ENCODE measurements at regions of chr17 and their contacts with region 1.

Region 1: DNA sequence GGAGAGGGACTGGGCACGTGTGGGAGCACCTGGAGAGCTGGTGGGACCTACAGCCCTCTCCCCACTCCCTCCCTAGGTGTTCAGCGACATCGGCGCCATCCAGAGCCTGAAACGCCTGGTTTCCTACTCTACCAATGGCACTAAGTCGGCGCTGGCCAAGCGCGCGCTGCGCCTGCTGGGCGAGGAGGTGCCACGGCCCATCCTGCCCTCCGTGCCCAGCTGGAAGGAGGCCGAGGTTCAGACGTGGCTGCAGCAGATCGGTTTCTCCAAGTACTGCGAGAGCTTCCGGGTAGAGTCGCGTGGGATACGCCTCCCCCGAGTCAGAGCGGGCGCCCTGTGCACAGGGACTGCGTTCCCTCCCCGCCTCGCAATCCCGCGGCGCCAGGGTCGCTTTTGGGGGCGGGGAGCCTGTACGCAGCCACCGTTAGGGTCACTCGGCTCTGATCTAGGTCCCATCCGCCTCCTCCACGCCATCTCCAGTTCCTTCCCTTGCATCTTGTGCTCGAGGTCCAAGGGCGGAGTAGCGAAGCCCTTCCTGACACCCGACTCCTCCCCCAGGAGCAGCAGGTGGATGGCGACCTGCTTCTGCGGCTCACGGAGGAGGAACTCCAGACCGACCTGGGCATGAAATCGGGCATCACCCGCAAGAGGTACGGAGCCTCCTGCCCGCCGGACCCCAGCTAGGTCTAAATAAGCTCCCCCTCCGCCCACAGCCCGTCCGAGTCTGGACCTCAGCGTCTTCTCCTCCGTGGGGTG is 13.0 kb downstream of the SARM1 start:
- DNase-seq: peak; percentile 53
- ATAC-seq: peak; percentile 52
- H3K4me3 Mint-ChIP-seq: peak overlapping the region; percentile 89
- H3K27ac Mint-ChIP-seq: no peak overlapping the region
- H3K4me1 Mint-ChIP-seq: peaks cover 11% of the 10 kb centered on the region
- H3K27me3 Mint-ChIP-seq: peaks cover 83% of the 10 kb centered on the region
- CTCF ChIP-seq: no peak

Region 2: DNA sequence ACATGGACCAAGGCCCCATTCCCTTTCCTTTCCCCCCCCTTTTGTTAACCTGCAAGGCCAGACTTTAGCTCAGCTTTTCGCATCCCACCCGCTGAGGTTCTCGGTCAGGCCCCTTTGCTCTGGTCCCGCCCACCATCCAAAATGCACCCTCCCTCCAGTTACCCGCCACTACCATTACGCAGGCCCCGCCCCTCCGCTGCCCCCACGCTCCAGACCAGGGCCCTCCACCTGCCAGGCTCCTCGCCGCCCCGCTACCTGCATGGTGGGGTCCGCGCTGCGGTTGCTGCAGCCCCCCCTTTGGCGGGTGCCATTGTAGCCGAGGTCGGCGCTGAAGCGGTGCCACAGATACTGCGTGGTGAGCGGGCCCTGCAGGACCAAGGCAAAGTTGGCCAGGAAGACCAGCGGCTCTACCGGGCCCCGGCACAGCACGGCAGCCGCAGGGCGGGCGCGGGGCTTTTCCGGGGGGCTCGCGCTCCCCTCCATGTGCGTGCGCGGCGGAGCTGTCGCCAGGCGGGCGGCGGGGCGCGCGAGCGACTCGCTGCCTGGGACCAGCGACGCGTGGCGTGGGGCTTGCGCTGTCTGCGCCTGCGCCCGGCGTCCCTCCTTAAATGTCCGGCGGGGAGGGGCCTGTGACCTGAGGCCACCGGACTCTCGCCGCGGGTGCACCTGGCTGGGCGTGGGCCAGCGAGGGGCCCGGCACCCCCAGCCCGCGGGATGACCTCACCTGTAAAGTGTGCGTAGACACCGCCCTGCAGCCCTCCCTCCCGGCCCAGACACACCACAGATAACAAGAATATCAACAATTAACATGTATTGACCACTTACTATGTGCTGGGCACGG is 21.4 kb after region 1 on chr17 and contains the start of gene SLC46A1:
- CTCF ChIA-PET with region 1: interaction called, 14 read pairs
- POLR2A ChIA-PET with region 1: interaction called, 5 read pairs
- DNase-seq: peak; percentile 80
- ATAC-seq: peak; percentile 53
- H3K4me3 Mint-ChIP-seq: peak within 1 kb of the TSS; percentile 78
- H3K27ac Mint-ChIP-seq: peak within 1 kb of the TSS; percentile 87
- H3K4me1 Mint-ChIP-seq: peaks cover 78% of the 10 kb centered on the region
- H3K27me3 Mint-ChIP-seq: peaks cover 31% of the 10 kb centered on the region
- CTCF ChIP-seq: no peak
- total RNA-seq, gene SLC46A1: 5.7 to 6.7 TPM (median 6.6 TPM) in 3 replicates

Region 3: DNA sequence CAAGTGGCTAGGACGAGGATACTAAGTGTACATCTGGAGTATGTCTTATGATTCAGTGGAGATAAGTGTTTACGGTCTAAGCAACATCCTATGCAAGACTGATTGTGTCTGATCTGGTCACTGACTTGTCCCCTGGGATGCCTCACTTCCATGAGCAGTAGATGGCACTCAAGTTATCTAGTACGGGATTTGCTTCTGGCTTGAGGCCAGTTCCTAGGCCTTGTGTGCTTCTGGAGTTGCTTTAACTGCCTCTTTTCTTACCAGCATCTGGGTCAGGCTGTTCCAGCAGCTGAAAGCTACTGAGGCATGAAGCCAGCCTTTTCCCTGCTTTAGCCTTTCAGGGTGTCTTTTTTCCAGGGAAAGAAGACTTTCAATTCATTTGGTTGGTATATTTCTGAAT is 300.5 kb after region 1 on chr17:
- CTCF ChIA-PET with region 1: no interaction called
- POLR2A ChIA-PET with region 1: no interaction called
- DNase-seq: no peak
- ATAC-seq: no peak
- H3K4me3 Mint-ChIP-seq: no peak overlapping the region
- H3K27ac Mint-ChIP-seq: no peak overlapping the region
- H3K4me1 Mint-ChIP-seq: no peaks in the 10 kb centered on the region
- H3K27me3 Mint-ChIP-seq: no peaks in the 10 kb centered on the region
- CTCF ChIP-seq: no peak

Measured in WTC11 (cell line).